ENCODE measurements at regions of chr1 and their contacts with region 1.

Region 1: DNA sequence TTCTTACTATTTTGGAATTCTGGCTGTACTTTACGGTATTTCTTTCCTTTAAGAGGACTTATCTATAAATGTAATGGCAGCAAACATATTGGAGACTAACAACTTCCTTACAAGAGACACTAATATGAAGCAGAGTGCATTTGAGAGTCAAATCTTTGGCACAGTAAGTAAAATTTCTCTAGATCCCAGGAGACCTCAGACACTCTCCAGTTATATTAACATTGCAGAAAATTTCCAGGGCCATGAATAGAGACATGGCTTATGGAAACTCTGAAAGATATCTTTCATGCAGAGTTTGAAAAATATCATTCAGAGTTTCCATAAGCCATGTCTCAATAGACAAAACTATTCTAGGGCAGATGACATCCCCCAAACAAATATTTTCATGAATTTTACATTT is 51.2 kb downstream of the IL23R start:
- DNase-seq: no peak
- ATAC-seq: no peak
- H3K4me3 Mint-ChIP-seq: no peak overlapping the region
- H3K27ac Mint-ChIP-seq: no peak overlapping the region
- H3K4me1 Mint-ChIP-seq: peaks cover 16% of the 10 kb centered on the region
- H3K27me3 Mint-ChIP-seq: no peaks in the 10 kb centered on the region

Region 2: GRCh38 chr1:67239738-67240137 is 22.3 kb after region 1 on chr1:
- POLR2A ChIA-PET with region 1: no interaction called
- DNase-seq: no peak
- ATAC-seq: peak; percentile 50
- H3K4me3 Mint-ChIP-seq: no peak overlapping the region
- H3K27ac Mint-ChIP-seq: peak overlapping the region; percentile 33
- H3K4me1 Mint-ChIP-seq: peaks cover 15% of the 10 kb centered on the region
- H3K27me3 Mint-ChIP-seq: no peaks in the 10 kb centered on the region

Region 3: GRCh38 chr1:67418839-67419586 is 201.6 kb after region 1 on chr1:
- POLR2A ChIA-PET with region 1: interaction called, 10 read pairs
- DNase-seq: no peak
- ATAC-seq: peak; percentile 22
- H3K4me3 Mint-ChIP-seq: no peak overlapping the region
- H3K27ac Mint-ChIP-seq: peak overlapping the region; percentile 51
- H3K4me1 Mint-ChIP-seq: peaks cover 52% of the 10 kb centered on the region
- H3K27me3 Mint-ChIP-seq: no peaks in the 10 kb centered on the region